ENCODE measurements at regions of chr2 and their contacts with region 1.

Region 1: DNA sequence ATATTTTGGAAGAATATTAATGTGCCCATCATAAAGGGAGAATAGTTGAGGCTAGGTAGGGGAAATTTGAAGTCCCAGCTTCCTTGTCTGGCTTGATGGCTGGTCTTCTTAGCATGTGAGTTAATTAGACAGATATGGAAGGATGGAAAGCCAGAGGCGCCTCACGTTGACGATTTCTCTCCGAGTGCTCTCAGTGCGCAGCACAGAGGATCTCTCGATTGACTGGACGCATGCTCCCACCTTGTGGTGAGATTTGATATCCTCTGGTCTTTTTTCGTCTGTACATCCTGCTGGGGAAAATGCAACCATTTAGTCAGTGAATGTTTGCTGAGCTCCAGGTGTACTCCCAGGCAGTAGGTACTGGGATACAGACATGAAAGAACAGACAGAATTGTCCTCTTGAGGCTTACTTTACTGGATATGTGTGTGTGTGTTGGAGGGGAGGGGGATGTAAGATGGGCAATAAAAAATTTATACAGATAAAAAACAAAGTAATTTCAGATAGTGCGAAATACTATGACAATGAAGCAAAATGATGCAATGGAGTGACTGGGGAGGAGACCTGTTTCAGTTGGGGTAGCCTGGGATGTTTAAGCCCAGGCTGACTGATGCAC is 66.9 kb upstream of the ZNG1B start:
- DNase-seq: peak; percentile 40
- H3K4me3 ChIP-seq: no peak overlapping the region
- H3K27ac ChIP-seq: no peak overlapping the region
- H3K4me1 ChIP-seq: peaks cover under 1% of the 10 kb centered on the region
- H3K27me3 ChIP-seq: peaks cover 21% of the 10 kb centered on the region
- CTCF ChIP-seq: peak; percentile 76

Region 2: GRCh38 chr2:113138428-113139322 is 231.9 kb before region 1 on chr2:
- intact Hi-C with region 1: loop called (anchors 5 kb)
- DNase-seq: no peak
- H3K4me3 ChIP-seq: no peak overlapping the region
- H3K27ac ChIP-seq: no peak overlapping the region
- H3K4me1 ChIP-seq: no peaks in the 10 kb centered on the region
- H3K27me3 ChIP-seq: no peaks in the 10 kb centered on the region
- CTCF ChIP-seq: peak; percentile 80

Region 3: DNA sequence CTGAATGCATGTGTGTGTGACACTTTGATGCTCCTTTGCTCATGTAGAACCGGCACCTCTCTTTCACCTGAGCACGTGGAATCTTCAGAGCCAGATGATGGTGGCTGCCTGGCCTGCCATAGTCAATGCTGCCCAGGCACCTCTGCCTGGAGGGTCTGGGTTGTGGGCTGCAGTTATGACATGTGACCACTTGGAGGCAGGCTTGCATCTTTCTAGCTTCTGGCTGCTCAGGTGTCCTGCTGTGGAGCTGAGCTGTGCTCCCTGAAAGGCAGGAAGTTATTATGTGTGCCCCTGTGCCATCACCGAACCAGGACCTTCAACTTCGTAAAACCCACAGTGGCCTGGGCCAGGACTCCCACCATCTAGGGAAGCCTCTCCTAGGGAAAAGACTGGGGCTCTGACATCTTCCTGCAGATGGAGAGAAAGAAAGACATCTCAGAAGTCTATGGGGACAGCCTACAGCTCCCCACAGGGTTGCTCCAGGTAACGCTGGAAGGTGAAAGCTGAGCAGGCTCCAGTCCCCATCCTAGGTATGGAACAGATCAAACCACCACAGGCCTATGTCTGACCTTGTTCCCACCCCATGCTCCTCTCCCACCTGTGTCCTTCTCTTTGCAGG is 166.6 kb before region 1 on chr2:
- intact Hi-C with region 1: loop called (anchors 5 kb)
- DNase-seq: peak; percentile 63
- H3K4me3 ChIP-seq: no peak overlapping the region
- H3K27ac ChIP-seq: no peak overlapping the region
- H3K4me1 ChIP-seq: peaks cover 7% of the 10 kb centered on the region
- H3K27me3 ChIP-seq: no peaks in the 10 kb centered on the region
- CTCF ChIP-seq: peak; percentile 92

Region 4: DNA sequence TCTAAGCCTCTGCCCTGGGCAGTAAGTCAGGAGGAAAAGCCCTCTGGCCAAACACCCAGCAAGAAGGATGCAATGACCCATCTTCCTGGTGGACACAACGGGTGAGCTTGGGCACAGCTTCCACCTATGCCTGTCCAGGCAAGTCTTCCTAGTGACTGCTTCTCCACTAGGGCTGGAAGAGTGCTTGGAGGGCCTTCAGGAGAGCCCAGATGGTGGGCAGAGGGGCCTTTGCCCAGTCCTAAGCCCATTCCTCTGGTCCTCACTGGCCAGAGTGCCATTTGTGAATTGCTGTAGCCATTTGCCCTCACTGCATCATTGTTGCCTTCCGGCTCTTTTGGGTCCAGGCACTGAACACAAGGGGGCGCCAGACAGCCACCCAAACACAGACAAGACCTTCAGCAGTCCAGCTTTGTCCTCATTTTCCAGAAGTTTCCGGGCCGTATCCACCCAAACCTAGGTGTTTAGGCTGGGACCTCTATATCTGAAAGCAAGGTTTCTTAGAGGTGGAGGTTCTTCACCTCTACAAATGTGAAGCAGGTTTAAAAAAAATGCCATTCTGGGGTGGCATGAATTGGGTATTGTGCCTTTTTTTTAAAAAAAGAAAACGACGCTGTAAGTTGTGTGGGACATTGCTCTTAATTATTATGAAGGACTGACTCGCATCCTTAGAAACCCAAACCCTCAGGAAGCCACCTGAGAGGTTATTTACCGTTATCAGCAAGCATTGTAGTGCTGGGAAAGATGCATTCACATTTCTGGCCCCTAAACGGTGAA is 121.4 kb before region 1 on chr2:
- intact Hi-C with region 1: loop called (anchors 5 kb)
- DNase-seq: peak; percentile 77
- H3K4me3 ChIP-seq: no peak overlapping the region
- H3K27ac ChIP-seq: no peak overlapping the region
- H3K4me1 ChIP-seq: peaks cover 23% of the 10 kb centered on the region
- H3K27me3 ChIP-seq: no peaks in the 10 kb centered on the region
- CTCF ChIP-seq: peak; percentile 92